CD4-positive, alpha-beta T cell (primary cell): ENCODE measurements at regions of chr7 and their contacts with region 1.

Region 1: GRCh38 chr7:107194049-107194448 is 25.2 kb downstream of the HBP1 start:
- DNase-seq: no peak
- ATAC-seq: no peak
- H3K4me3 ChIP-seq: no peak overlapping the region
- H3K4me3 Mint-ChIP-seq: no peak overlapping the region
- H3K27ac ChIP-seq: no peak overlapping the region
- H3K27ac Mint-ChIP-seq: peak overlapping the region; percentile 40
- H3K4me1 ChIP-seq: no peaks in the 10 kb centered on the region
- H3K4me1 Mint-ChIP-seq: peaks cover 4% of the 10 kb centered on the region
- H3K27me3 ChIP-seq: no peaks in the 10 kb centered on the region
- H3K27me3 Mint-ChIP-seq: no peaks in the 10 kb centered on the region
- CTCF ChIP-seq: no peak

Region 2: GRCh38 chr7:107180378-107180777 is 13.7 kb before region 1 on chr7:
- CTCF ChIA-PET with region 1: interaction called, 6 read pairs
- POLR2A ChIA-PET with region 1: interaction called, 3 read pairs
- intact Hi-C with region 1: loop called (anchors 2 kb)
- DNase-seq: peak in 11 of 14 experiments; percentile 23 to 84 (median 54)
- ATAC-seq: peak; percentile 56
- H3K4me3 ChIP-seq: no peak overlapping the region
- H3K4me3 Mint-ChIP-seq: no peak overlapping the region
- H3K27ac ChIP-seq: no peak overlapping the region
- H3K27ac Mint-ChIP-seq: no peak overlapping the region
- H3K4me1 ChIP-seq: peaks cover 7% of the 10 kb centered on the region
- H3K4me1 Mint-ChIP-seq: peaks cover 63% of the 10 kb centered on the region
- H3K27me3 ChIP-seq: no peaks in the 10 kb centered on the region
- H3K27me3 Mint-ChIP-seq: no peaks in the 10 kb centered on the region
- CTCF ChIP-seq: no peak

Region 3: DNA sequence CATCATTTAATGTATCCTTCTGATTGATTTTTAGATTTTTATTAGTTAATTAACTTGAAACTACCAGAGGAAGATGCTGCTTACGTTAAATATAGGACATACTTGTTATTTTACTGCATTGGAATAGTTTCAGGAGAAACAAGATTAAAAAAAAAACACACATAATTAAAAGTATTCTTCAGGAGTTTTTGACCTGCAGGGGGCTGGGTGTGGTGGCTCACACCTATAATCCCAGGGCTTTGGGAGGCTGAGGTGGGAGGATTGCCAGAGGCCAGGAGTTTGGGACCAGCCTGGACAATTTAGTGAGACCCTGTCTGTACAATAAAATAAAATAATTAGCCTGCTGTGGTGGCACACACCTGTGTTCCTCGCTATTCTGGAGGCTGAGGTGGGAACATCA is 560.6 kb after region 1 on chr7:
- CTCF ChIA-PET with region 1: no interaction called
- POLR2A ChIA-PET with region 1: no interaction called
- intact Hi-C with region 1: loop called in 1 of 2 experiments (anchors 10 kb)
- DNase-seq: peak in 1 of 14 experiments; percentile 13
- ATAC-seq: no peak
- H3K4me3 ChIP-seq: no peak overlapping the region
- H3K4me3 Mint-ChIP-seq: no peak overlapping the region
- H3K27ac ChIP-seq: no peak overlapping the region
- H3K27ac Mint-ChIP-seq: no peak overlapping the region
- H3K4me1 ChIP-seq: peaks cover 3% of the 10 kb centered on the region
- H3K4me1 Mint-ChIP-seq: peaks cover 40% of the 10 kb centered on the region
- H3K27me3 ChIP-seq: no peaks in the 10 kb centered on the region
- H3K27me3 Mint-ChIP-seq: no peaks in the 10 kb centered on the region
- CTCF ChIP-seq: no peak